ENCODE measurements at regions of chr3 and their contacts with region 1.

Region 1: DNA sequence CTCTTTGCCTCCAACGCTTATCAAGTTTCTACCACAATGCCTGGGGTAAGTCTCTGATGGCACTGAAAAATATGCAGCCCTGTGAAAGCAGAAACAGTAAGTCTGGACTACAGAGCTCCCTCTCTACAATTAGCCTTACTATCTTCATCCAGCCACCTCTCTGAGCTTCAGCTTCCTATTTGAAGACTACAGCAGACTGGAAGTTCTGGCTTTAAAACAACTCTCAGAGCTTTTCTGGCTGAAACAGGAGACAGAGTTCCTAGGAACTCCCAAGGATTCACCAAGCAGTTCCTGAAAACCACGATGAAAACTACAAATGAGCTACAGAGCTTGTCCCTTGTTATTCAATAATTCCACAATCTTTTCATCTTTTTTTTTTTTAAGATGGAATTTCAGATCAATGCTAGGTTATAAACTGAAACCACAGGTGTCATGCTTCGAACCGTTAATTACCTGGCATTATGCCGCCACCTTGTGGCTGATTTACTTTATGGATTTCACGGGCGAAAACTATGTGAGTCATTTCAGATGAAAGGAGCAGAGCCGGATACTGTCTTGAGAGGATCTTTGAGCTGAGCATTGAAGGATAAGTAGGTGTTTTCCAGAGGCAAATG is 3.9 kb downstream of the CRYGS start:
- DNase-seq: peak; percentile 95
- H3K4me3 Mint-ChIP-seq: no peak overlapping the region
- H3K27ac Mint-ChIP-seq: peak overlapping the region; percentile 47
- H3K4me1 Mint-ChIP-seq: peaks cover 60% of the 10 kb centered on the region
- H3K27me3 Mint-ChIP-seq: no peaks in the 10 kb centered on the region

Region 2: DNA sequence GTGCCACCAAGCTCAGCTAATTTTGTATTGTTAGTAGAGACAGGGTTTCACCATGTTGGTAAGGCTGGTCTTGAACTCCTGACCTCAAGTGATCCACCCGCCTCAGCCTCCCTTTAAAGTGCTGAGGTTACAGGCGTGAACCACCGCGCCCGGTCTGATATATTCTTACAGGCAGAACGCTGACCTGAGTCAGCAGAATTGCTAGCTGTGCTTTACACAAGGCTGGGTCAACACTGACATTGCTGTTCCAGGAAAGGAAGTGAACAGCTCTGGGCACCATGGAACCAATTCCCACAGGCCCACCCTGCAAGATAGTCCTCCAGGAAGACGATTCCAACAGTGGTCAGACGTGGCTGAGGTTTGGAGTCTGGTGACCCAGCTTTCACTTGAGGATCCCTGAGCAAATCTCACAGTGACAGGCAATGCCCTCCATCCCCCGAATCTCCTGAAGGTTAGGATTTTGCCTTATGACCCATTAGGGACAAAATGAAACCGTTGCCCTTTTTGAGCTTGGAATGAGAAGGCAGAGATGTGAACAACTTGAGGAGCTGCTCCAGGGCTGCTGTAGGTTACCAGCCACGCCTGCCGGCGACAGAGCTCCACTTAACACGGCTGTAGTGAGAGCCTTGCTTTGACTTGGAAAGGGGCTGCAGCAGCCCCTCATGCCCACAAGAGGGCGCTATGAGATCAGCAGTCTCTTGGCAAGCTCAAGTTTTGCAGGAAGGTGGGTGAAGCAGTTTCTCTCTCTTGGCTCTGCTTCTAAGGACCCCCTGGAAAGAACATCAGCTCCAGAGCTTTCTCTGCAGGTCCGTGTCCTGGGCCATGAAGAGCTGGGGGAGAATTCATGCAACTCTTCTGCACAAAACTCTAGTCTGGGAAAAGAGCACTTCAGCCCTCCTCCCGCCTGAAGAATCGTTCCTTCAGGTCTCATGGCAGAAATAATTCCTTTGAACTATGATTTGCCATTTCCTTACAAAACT is 880.1 kb before region 1 on chr3:
- CTCF ChIA-PET with region 1: interaction called, 4 read pairs
- intact Hi-C with region 1: loop called (anchors 5 kb)
- DNase-seq: peak; percentile 85
- H3K4me3 Mint-ChIP-seq: no peak overlapping the region
- H3K27ac Mint-ChIP-seq: no peak overlapping the region
- H3K4me1 Mint-ChIP-seq: no peaks in the 10 kb centered on the region
- H3K27me3 Mint-ChIP-seq: peaks cover 7% of the 10 kb centered on the region

Region 3: GRCh38 chr3:185976977-185977678 is 563.2 kb before region 1 on chr3:
- CTCF ChIA-PET with region 1: interaction called, 41 read pairs
- intact Hi-C with region 1: loop called (anchors 1 kb)
- DNase-seq: peak; percentile 94
- H3K4me3 Mint-ChIP-seq: no peak overlapping the region
- H3K27ac Mint-ChIP-seq: no peak overlapping the region
- H3K4me1 Mint-ChIP-seq: peaks cover 9% of the 10 kb centered on the region
- H3K27me3 Mint-ChIP-seq: no peaks in the 10 kb centered on the region

Region 4: GRCh38 chr3:186217820-186218164 is 322.5 kb before region 1 on chr3:
- CTCF ChIA-PET with region 1: interaction called, 12 read pairs
- intact Hi-C with region 1: no loop called
- DNase-seq: peak; percentile 30
- H3K4me3 Mint-ChIP-seq: no peak overlapping the region
- H3K27ac Mint-ChIP-seq: no peak overlapping the region
- H3K4me1 Mint-ChIP-seq: peaks cover 14% of the 10 kb centered on the region
- H3K27me3 Mint-ChIP-seq: peaks cover 3% of the 10 kb centered on the region

Region 5: GRCh38 chr3:186361762-186362536 is 178.4 kb before region 1 on chr3 and contains the start of gene DGKG:
- CTCF ChIA-PET with region 1: interaction called, 3 read pairs
- intact Hi-C with region 1: loop called (anchors 2 kb)
- DNase-seq: peak; percentile 37
- H3K4me3 Mint-ChIP-seq: peak within 1 kb of the TSS; percentile 38
- H3K27ac Mint-ChIP-seq: no peak within 1 kb of the TSS
- H3K4me1 Mint-ChIP-seq: peaks cover 3% of the 10 kb centered on the region
- H3K27me3 Mint-ChIP-seq: peaks cover 48% of the 10 kb centered on the region
- total RNA-seq, gene DGKG: 0.25 to 0.98 TPM

Region 6: DNA sequence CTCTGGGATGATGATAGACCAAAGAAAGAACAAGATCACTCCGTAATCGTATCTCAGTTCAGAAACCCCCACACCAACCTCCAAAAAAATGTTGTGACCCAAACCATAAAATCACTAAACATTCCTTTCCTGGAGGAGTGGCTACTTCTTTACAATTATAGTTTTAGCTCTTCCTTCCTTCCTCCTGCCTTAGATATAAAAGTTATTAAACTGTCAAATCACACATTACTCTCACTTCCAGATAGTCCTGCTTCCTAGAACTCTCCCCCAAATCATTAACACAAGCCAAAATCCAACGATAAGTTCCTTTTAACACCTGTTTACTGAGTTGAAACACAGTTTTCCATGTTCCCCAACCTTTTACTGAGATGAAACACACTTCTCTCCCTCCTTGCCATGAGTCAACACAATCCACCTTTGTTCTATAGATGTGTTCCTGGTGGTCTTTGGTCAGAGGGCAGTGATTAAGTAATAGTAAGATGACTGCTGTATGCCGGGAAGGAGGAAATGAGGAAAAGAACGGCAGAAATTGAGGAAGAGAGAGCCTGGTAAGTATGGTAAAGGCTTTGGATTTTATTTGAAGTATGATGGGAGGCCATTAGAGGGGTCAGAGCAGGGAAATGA is 12.2 kb after region 1 on chr3:
- CTCF ChIA-PET with region 1: interaction called, 17 read pairs
- intact Hi-C with region 1: no loop called
- DNase-seq: no peak
- H3K4me3 Mint-ChIP-seq: no peak overlapping the region
- H3K27ac Mint-ChIP-seq: no peak overlapping the region
- H3K4me1 Mint-ChIP-seq: peaks cover 3% of the 10 kb centered on the region
- H3K27me3 Mint-ChIP-seq: no peaks in the 10 kb centered on the region

Measured in activated naive CD4-positive, alpha-beta T cell treated with anti-CD3 and anti-CD28 coated beads for 36 hours (primary cell).